SK-N-SH (cell line): ENCODE measurements at regions of chr10 and their contacts with region 1.

Region 1: DNA sequence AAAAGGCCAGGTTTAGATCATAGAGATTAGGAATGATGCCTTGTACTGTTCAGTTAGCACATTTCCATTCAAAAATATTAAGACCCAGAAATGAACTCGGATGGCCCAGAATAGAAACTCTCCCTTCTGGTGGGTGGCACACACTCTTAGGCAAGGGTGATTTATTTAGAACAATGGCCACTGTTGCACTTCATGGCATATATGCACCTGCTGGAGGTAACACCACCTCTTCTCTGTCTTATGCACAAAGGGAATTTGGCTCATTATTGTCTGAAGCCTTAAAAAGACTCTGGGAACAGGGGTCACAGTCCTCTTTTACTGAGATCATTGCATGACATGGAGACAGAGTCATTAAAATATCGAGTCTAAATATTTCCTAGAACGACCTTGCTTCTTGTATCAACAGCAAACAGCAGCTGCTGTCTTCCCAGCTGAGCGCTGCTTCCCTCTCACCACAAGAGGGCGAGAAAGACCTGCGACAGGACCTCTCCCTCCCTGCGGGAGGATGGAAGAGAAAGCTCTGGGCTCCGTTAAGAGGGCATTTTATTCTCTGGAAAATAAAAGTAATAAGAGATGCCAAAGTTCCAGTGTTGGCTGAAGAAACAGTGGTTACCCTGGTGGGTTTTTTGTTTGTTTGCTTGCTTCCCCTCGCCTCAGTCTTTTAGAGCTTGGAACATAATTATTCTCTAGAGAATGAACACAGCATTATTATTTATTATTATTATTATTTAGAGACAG is 13.6 kb upstream of the BAMBI start:
- DNase-seq: peak; percentile 82
- H3K4me3 ChIP-seq: no peak overlapping the region; a peak in 1 of 4 replicates
- H3K27ac ChIP-seq: no peak overlapping the region
- H3K4me1 ChIP-seq: no peaks in the 10 kb centered on the region
- H3K27me3 ChIP-seq: 0 out of 2 replicates have a peak, but pooled peaks cover 9% of the 10 kb centered on the region
- CTCF ChIP-seq: peak; percentile 99
- EP300 ChIP-seq: no peak
- RAD21 ChIP-seq: peak; percentile 100

Region 2: GRCh38 chr10:28541717-28542365 is 121.9 kb before region 1 on chr10:
- CTCF ChIA-PET with region 1: no interaction called
- POLR2A ChIA-PET with region 1: no interaction called
- DNase-seq: peak; percentile 12
- H3K4me3 ChIP-seq: no peak overlapping the region
- H3K27ac ChIP-seq: no peak overlapping the region; a peak in 1 of 4 replicates
- H3K4me1 ChIP-seq: peaks cover 0 to 3% of the 10 kb centered on the region in 2 experiments; a peak in 2 of 4 replicates
- H3K27me3 ChIP-seq: no peaks in the 10 kb centered on the region
- CTCF ChIP-seq: 0 out of 2 replicates have a peak, but pooled peaks have one; percentile 17
- EP300 ChIP-seq: no peak
- RAD21 ChIP-seq: peak; percentile 32; the same call in 1 of the 2 replicates

Region 3: DNA sequence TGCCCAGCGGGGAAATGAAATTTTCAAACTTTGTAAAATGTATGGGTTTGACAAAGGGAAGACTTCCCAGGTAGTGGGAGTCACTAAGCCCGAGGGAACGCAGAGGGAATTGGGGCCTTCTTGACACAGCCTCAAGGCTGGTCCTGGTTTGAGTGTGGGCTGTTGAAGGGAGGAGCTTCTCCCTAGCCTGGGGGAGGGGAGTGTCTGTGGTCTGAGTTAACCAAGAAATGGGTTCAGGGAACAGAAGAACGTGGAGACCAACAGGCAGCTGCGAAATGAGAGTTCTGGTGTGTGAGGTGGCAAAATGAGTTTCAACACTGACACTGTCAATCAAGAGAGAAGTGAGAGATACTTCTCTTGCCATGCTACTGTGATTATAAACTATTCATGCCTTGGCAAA is 19.1 kb before region 1 on chr10:
- CTCF ChIA-PET with region 1: interaction called, 11 read pairs
- POLR2A ChIA-PET with region 1: no interaction called
- DNase-seq: no peak
- H3K4me3 ChIP-seq: no peak overlapping the region
- H3K27ac ChIP-seq: no peak overlapping the region
- H3K4me1 ChIP-seq: no peaks in the 10 kb centered on the region
- H3K27me3 ChIP-seq: no peaks in the 10 kb centered on the region; the same call in 1 of the 2 replicates
- CTCF ChIP-seq: no peak
- EP300 ChIP-seq: no peak
- RAD21 ChIP-seq: no peak

Region 4: DNA sequence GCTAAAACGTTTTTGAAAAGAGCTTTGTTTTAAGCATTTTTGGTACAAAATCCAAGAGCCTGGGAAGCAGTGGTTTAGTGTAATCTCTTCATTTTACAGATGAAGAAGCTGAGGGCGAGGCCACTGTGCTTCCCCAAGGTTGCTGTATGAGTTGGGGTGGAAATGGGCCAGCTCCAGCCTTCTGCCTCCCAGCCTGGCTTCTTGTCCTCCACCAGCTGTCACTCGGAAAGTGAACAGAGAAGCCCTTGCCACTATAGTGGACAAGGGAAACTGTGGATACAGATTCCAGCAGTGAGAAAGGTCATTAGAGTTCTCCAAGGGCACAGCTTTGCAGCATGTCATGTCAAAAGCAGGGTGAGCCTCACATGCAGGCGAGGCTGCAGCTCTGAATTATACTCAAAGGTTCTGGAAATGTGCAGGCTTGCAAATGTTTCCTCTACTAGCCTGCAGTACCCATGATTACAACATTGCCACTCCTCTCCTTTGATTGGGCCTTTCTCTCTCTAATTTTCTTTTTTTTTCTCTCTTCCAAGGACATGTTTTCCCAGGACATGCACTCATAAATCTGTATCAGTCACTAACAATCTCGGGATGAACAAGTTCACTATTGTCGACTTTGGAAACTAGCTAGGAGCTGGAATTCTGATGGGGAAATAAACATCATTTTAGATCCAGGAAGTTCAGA is 46.6 kb after region 1 on chr10:
- CTCF ChIA-PET with region 1: interaction called, 11 read pairs
- POLR2A ChIA-PET with region 1: no interaction called
- DNase-seq: no peak
- H3K4me3 ChIP-seq: no peak overlapping the region
- H3K27ac ChIP-seq: no peak overlapping the region
- H3K4me1 ChIP-seq: peaks cover 0 to 5% of the 10 kb centered on the region in 2 experiments; a peak in 1 of 4 replicates
- H3K27me3 ChIP-seq: no peaks in the 10 kb centered on the region
- CTCF ChIP-seq: no peak
- EP300 ChIP-seq: no peak
- RAD21 ChIP-seq: no peak

Region 5: GRCh38 chr10:28778524-28778923 is 114.8 kb after region 1 on chr10:
- CTCF ChIA-PET with region 1: no interaction called
- POLR2A ChIA-PET with region 1: no interaction called
- DNase-seq: peak; percentile 19
- H3K4me3 ChIP-seq: no peak overlapping the region
- H3K27ac ChIP-seq: no peak overlapping the region
- H3K4me1 ChIP-seq: peaks cover 0 to 5% of the 10 kb centered on the region in 2 experiments; a peak in 1 of 4 replicates
- H3K27me3 ChIP-seq: no peaks in the 10 kb centered on the region
- CTCF ChIP-seq: no peak
- EP300 ChIP-seq: no peak
- RAD21 ChIP-seq: no peak

Region 6: GRCh38 chr10:29131952-29132820 is 468.4 kb after region 1 on chr10:
- CTCF ChIA-PET with region 1: interaction called, 119 read pairs
- POLR2A ChIA-PET with region 1: no interaction called
- DNase-seq: no peak
- H3K4me3 ChIP-seq: no peak overlapping the region
- H3K27ac ChIP-seq: no peak overlapping the region
- H3K4me1 ChIP-seq: peaks cover 7 to 10% of the 10 kb centered on the region in 2 experiments; a peak in 3 of 4 replicates
- H3K27me3 ChIP-seq: no peaks in the 10 kb centered on the region; the same call in 1 of the 2 replicates
- CTCF ChIP-seq: no peak
- EP300 ChIP-seq: no peak
- RAD21 ChIP-seq: no peak

Region 7: GRCh38 chr10:29304264-29305030 is 640.7 kb after region 1 on chr10:
- CTCF ChIA-PET with region 1: interaction called, 133 read pairs
- POLR2A ChIA-PET with region 1: no interaction called
- DNase-seq: peak; percentile 80
- H3K4me3 ChIP-seq: no peak overlapping the region; a peak in 1 of 4 replicates
- H3K27ac ChIP-seq: peak overlapping the region in 1 of 2 experiments; percentile 66; a peak in 2 of 4 replicates
- H3K4me1 ChIP-seq: peaks cover 0 to 3% of the 10 kb centered on the region in 2 experiments; a peak in 1 of 4 replicates
- H3K27me3 ChIP-seq: no peaks in the 10 kb centered on the region
- CTCF ChIP-seq: peak; percentile 85
- EP300 ChIP-seq: no peak
- RAD21 ChIP-seq: peak; percentile 97